ENCODE measurements at regions of chr1 and their contacts with region 1.

Region 1: DNA sequence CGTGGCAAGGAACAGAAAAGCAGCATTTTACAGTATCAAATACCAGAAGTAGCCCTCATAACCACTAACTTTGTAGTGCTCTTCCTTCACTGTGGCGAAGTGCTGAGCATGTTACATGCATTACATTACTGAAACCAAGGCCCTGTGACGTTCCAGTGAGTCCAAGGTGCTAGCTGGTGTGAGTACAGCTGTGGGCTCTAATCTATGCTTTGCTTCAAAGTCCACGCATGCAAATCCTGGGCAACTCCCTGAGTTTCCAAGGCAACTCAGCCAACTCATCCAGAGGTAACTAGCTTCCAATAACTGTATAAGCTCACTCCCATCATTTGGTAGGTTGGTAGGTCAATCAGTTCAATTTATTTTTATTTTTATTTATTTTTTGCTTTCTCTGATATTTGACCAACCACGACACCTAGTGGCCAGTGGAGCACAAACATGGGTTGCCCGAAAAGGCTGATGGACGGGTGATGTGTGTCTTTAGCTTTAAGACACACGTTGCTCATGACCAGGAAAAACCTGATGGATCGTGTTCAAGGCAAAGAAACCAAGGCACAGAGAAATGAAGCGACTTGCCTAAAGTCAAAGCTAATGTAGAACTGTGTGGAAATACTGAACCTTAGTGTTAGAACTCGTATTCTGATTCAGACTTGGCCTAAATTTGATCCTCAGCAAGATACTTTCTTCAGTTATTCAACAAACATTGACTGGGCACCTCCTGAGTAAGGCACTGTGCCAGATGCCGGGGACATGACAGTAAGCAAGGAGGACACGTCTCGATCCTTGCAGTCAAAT is 73.0 kb downstream of the GNG12 start:
- DNase-seq: peak in 7 of 10 donors; percentile 37 to 60 (median 53)
- H3K4me3 ChIP-seq: peak overlapping the region in 1 of 59 donors; percentile 9
- H3K27ac ChIP-seq: peak overlapping the region in 3 of 59 donors; percentile 16 to 43 (median 37)
- H3K27me3 ChIP-seq: peaks cover 0 to 11% (median 0%) of the 10 kb centered on the region in 45 donors
- CTCF ChIP-seq: peak; percentile 79 to 99 (median 94)

Region 2: DNA sequence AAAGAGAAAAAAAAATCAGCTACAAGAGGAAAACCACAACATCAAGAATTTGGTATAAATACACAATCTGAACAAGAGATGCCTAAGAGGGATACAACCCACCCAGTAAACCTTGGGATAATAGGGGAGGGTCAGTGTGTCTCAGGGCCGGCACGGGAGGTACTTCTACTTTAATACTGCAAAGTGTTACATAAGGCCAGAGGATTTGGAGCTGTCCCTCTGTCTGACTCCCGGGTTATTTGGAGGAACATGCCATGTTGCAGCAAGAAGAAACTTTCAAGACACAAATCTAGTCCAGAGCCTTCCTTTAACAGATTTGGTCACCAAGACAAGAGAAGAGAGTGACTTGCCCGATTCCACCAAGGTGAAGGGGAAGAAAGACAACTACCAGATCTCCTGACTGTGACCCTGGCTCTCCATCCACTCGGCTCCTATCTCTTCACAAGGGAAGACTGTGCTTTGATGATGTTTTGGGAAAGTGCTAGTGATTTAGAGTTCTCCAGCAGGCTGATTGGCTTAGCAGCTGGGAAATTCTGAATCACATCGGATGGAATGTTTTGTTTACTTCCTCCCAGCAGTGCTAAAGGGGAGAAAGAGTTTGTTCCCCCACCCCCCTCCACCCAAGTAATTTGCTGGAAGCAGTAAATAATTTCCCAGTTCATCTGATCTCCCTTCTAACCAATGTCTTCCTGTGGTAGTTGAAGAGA is 1197.0 kb before region 1 on chr1:
- intact Hi-C with region 1: no loop called
- DNase-seq: no peak
- H3K4me3 ChIP-seq: peak overlapping the region in 2 of 59 donors; percentile 4 to 21
- H3K27ac ChIP-seq: peak overlapping the region in 28 of 59 donors; percentile 6 to 67 (median 36)
- H3K27me3 ChIP-seq: no peaks in the 10 kb centered on the region
- CTCF ChIP-seq: no peak

Region 3: DNA sequence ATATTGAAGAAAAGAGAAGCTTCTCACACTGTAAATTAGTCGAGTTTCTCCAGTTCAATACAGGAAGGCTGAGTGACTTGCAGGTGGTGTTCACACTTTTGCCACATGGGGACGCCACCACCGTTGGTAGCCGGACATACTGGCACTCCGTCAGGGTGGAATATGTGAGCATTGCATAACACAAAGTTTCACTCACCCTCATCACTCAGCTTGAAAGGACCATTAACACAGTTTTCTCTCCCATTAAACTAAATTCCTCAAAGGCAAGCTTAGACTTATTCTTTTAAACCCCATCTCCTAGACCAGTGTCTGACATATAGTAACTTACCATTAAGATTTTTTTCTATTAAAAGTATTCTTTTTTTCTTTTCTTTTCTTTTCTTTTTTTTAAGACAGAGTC is 224.8 kb before region 1 on chr1:
- intact Hi-C with region 1: loop called (anchors 1 to 5 kb)
- DNase-seq: peak; percentile 13 to 75 (median 60)
- H3K4me3 ChIP-seq: no peak overlapping the region
- H3K27ac ChIP-seq: no peak overlapping the region
- H3K27me3 ChIP-seq: no peaks in the 10 kb centered on the region
- CTCF ChIP-seq: peak; percentile 60 to 90 (median 76)

Region 4: DNA sequence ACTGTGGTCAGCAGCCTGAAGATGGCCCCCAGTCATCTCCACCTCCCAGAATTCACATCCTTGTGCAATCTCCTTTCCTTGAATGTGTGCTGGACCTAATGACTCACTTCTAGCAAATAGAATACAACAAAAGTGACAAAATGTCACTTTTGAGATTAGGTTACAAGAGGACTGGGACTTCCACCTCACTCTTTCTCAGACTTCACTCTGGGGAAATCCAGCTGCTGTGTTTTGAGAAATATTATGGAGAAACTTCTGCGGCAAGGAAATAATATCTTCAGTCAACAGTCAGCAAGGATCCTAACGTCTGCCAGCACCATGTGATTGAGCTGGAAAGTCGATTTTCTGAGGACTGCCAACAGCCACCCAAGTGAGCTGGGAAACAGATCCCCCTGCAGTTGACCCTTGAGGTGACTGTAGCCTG is 145.7 kb before region 1 on chr1:
- intact Hi-C with region 1: no loop called
- DNase-seq: no peak
- H3K4me3 ChIP-seq: no peak overlapping the region
- H3K27ac ChIP-seq: no peak overlapping the region
- H3K27me3 ChIP-seq: peaks cover 0 to 6% (median 0%) of the 10 kb centered on the region in 45 donors
- CTCF ChIP-seq: no peak

Region 5: GRCh38 chr1:67696708-67697107 is 63.5 kb before region 1 on chr1:
- intact Hi-C with region 1: no loop called
- DNase-seq: no peak
- H3K4me3 ChIP-seq: no peak overlapping the region
- H3K27ac ChIP-seq: no peak overlapping the region
- H3K27me3 ChIP-seq: no peaks in the 10 kb centered on the region
- CTCF ChIP-seq: no peak

Region 6: DNA sequence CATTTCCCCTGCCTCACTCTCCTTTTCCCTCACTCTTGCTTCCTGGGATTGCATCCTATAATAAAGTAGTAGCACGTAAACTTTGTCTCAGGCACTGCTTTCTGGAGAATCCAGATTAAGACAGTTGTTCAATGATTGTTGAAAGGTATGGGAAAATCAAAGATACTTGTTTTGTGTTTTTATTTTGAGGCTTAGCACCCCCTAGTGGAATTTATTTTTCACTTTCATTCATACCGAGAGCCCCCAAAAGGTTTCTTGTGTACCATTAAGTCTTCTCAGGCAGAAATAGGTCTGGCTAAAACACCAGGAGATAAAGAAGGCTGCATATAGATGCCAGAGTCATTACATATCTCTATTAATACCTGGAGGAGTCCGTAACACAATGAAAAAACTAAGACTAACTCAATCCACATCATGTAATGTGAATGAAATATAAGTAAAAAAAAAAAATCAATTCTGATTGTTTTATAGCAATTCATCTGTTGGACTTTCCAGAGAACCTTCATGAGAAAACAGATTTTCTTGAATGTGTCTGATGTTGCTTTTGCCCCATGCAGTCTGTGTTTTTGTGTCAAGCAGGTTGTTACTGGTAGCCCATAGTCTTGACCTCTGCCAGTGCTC is 586.1 kb after region 1 on chr1:
- intact Hi-C with region 1: loop called in 1 of 2 experiments (anchors 10 kb)
- DNase-seq: no peak
- H3K4me3 ChIP-seq: no peak overlapping the region
- H3K27ac ChIP-seq: no peak overlapping the region
- H3K27me3 ChIP-seq: no peaks in the 10 kb centered on the region
- CTCF ChIP-seq: peak; percentile 40 to 81 (median 60)

Measured in dorsolateral prefrontal cortex (tissue), 120 donors.